ENCODE measurements at regions of chr10 and their contacts with region 1.

Region 1: GRCh38 chr10:57338823-57339558 is 928.7 kb downstream of the IPMK start:
- DNase-seq: no peak
- H3K4me3 ChIP-seq: no peak overlapping the region
- H3K27ac ChIP-seq: no peak overlapping the region
- H3K4me1 ChIP-seq: no peaks in the 10 kb centered on the region
- H3K27me3 ChIP-seq: no peaks in the 10 kb centered on the region
- CTCF ChIP-seq: peak in 8 of 11 experiments; percentile 31 to 69 (median 53)
- POLR2A ChIP-seq: no peak

Region 2: GRCh38 chr10:57657164-57657765 is 318.3 kb after region 1 on chr10:
- intact Hi-C with region 1: loop called (anchors 10 kb)
- DNase-seq: no peak
- H3K4me3 ChIP-seq: no peak overlapping the region
- H3K27ac ChIP-seq: no peak overlapping the region
- H3K4me1 ChIP-seq: no peaks in the 10 kb centered on the region
- H3K27me3 ChIP-seq: no peaks in the 10 kb centered on the region
- CTCF ChIP-seq: peak in 9 of 11 experiments; percentile 31 to 72 (median 59)
- POLR2A ChIP-seq: no peak

Region 3: GRCh38 chr10:58064714-58065528 is 725.9 kb after region 1 on chr10:
- intact Hi-C with region 1: loop called (anchors 10 kb)
- DNase-seq: no peak
- H3K4me3 ChIP-seq: no peak overlapping the region
- H3K27ac ChIP-seq: no peak overlapping the region
- H3K4me1 ChIP-seq: no peaks in the 10 kb centered on the region
- H3K27me3 ChIP-seq: peaks cover 0 to 5% (median 0%) of the 10 kb centered on the region in 7 donors
- CTCF ChIP-seq: peak in 8 of 11 experiments; percentile 10 to 42 (median 34)
- POLR2A ChIP-seq: no peak

Region 4: DNA sequence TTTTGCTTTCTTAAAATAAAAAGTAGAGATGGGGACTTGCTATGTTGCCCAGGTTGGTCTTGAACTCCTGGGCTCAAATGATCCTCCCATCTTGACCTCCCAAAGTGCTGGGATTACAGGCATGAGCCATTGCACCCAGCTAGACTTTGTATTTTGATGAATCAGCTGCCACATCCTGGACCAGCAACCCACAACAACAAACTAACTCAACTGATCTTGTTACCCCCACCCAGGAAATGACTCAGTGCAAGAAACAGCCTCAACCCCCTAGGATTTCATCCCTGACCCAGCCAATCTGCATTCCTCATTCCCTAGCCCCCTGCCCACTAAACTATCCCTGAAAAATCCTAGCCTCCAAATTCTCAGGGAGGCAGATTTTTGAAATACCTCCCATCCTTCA is 805.0 kb after region 1 on chr10:
- intact Hi-C with region 1: loop called (anchors 10 kb)
- DNase-seq: no peak
- H3K4me3 ChIP-seq: no peak overlapping the region
- H3K27ac ChIP-seq: no peak overlapping the region
- H3K4me1 ChIP-seq: no peaks in the 10 kb centered on the region
- H3K27me3 ChIP-seq: peaks cover 0 to 11% (median 0%) of the 10 kb centered on the region in 7 donors
- CTCF ChIP-seq: no peak
- POLR2A ChIP-seq: no peak

Measured in spleen (tissue), 13 donors.